ENCODE measurements at regions of chr2 and their contacts with region 1.

Region 1: DNA sequence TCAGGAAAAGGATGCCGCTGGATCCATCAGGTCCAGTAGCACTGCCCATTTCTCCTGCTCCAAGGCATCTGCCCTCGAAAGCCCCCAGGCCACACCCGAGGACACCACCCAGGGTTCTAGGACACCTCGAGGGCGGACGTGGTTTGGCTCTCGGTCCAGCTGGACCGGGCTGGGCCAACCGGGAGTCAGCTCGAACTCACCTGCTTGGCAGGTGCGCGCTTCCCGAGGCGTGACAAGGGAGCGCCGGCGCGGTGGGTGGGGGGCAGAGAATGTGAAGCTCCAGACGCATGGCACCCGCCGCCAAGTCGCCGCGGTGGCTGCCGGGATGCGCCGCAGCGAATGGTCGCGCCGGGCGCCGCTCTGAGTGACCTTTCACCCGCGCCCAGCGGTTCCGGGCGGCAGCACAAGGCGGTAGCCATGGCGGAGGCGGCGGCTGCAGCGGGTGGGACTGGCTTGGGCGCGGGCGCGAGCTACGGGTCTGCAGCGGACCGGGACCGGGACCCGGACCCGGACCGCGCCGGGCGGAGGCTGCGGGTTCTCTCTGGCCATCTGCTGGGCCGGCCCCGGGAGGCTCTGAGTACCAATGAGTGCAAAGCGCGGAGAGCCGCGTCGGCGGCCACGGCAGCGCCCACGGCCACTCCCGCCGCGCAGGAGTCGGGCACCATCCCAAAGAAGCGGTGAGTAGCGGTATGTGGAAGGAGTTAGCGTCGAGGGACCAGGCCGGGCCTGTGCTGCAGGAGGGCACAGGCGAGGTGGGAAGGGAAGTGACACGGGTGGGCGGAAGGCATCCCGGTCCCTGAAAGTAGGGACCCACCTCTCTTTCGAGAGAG is at the start of gene AGPS:
- DNase-seq: peak; percentile 89
- CTCF ChIP-seq: no peak

Region 2: DNA sequence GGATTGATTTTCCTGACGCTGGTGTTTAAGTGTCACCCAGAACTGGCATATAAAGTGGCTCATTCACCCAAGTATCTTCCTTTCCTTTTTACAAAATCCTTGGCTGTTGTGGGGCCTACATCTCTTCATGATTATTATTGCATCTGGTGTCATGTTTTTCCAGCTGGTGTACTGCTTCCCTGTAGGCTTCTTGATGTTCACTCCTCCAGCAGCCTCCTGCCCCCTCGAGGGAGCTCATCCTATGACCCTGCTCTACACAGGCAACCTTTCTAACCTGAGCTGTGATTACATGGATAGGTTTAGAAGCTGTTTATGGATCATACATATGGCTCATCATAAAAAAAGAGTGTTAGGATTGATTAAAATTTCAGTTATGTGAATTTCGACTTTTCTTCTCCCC is 12.4 kb before region 1 on chr2:
- CTCF ChIA-PET with region 1: interaction called, 25 read pairs
- POLR2A ChIA-PET with region 1: no interaction called
- DNase-seq: no peak
- CTCF ChIP-seq: no peak

Region 3: DNA sequence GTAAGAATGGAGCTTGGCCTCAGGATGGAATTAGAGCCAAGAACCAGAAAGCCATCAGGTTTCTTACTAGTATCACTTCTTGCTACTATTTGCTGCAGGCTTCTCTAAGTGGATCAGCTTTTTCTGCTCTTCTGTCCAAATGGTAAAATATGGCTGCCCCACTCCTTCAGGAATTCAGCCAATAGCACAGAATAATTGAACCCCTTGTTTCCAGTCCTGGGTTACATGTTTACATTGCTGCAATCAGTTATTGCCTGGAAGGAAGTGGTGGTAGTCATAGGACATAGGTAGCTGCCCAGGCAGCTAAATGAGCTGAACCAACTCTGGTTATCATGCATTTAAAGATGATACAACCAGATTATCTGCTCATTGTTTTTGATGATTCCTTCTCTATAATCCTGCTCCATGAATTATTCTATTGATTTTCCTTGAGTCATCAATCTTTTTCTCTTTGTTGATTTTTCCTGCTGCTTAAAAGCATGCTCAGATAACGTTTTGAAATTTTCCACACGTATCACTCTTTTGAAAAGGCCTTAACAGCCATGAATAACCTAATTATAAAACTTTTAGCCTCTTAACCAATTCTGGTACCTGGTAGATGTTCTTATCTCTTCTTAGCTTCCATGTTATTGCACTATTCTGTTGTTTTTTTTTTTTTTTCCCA is 12.6 kb after region 1 on chr2:
- CTCF ChIA-PET with region 1: interaction called, 16 read pairs
- POLR2A ChIA-PET with region 1: no interaction called
- DNase-seq: no peak
- CTCF ChIP-seq: no peak

Region 4: DNA sequence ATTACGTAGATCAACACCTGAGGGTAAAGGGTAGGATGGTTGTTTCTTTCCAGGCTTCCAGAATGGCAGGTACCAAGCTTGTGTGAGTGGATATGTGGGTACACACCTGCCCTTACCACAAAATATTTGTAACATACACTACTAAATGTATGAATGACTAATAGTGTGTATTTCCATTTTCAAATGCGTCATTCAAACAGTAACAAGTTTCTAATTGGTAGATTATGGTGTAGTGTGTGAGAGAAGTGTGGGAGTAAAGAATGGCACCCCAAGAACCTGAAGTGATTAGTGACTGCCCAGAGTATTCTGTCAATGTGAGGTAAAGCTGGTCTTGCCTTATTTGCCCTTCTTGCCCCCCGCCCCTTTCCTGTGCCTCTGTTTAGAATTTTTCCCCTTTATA is 21.1 kb after region 1 on chr2:
- CTCF ChIA-PET with region 1: interaction called, 24 read pairs
- POLR2A ChIA-PET with region 1: no interaction called
- DNase-seq: no peak
- CTCF ChIP-seq: no peak

Region 5: GRCh38 chr2:177622521-177622920 is 229.9 kb after region 1 on chr2:
- CTCF ChIA-PET with region 1: no interaction called
- POLR2A ChIA-PET with region 1: no interaction called
- DNase-seq: no peak
- CTCF ChIP-seq: no peak